Heart left ventricle (tissue), 16 donors: ENCODE measurements at regions of chr5 and their contacts with region 1.

Region 1: DNA sequence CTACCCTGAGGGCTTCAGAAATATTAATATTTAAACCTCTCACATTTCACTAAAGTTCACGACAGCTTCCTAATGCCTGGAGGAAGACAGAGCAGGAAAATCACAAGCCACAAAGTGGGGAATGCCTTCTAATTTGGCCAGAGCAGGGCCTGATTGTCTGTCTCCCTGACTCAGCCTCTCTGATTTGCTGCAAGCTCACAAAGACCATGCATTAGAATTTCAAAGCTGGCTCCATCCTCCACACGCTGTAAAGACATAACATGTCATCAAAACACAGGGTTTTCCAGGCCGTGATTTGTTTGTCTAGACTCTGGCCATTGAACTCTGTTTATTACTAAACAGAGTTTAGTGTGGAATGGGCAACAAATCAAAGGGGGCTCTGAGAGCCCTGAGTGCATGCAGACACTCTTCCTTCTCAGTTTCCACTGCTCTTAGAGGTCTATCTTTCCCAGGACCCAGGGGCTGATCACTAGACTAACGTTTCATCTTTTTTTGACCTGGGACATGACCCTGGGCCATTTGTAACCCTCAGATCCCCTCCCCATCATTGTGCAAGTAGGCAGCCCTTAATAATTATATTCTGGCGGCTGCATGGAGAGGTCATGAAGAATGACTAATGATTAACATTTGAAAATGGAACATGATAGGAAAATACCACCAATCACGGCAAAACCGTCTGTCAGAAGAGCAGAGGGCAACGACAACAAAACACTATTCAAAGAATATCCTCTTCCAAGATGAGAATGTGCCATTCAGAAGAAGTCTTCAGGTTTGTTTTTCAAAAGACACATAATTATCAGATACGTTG is 140.2 kb downstream of the ENC1 start:
- DNase-seq: no peak
- ATAC-seq: no peak
- H3K4me3 ChIP-seq: no peak overlapping the region
- H3K27ac ChIP-seq: no peak overlapping the region
- H3K4me1 ChIP-seq: peaks cover 0 to 23% (median 3%) of the 10 kb centered on the region in 12 donors
- H3K27me3 ChIP-seq: no peaks in the 10 kb centered on the region
- CTCF ChIP-seq: no peak
- POLR2A ChIP-seq: no peak

Region 2: DNA sequence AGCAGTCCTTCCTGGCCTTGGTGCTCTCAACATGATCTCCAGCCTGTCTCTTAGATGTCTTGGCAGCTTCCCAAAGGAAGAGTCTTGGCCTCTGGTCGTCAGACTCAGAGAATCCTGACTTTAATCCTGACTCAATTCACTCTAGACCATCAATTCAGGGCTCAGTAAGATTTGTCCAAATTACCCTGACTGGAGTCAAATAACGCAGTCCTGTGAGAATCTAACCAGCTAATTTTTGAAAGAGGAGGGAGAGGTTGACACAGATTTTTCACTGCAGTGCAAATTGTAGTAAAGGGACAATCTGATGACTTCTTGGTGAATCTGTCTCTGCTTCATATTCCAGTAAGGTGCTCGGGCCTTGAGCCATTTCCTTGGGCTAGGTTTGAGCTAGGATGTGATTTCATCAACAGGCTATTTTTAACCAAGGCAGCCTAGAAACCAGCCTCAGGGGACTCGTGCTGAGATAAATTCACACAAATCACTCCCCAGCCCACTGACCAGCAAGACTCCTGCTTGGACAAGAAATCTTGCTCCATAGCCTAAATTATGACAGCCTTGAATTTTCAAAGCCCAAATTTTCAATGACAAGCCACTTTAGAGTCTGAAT is 117.2 kb before region 1 on chr5:
- intact Hi-C with region 1: loop called in 1 of 10 experiments (anchors 10 kb)
- DNase-seq: peak in 4 of 5 donors; percentile 73 to 78 (median 76)
- ATAC-seq: peak; percentile 72 to 93 (median 86)
- H3K4me3 ChIP-seq: peak overlapping the region in 1 of 12 donors; percentile 8
- H3K27ac ChIP-seq: peak overlapping the region; percentile 31 to 90 (median 70)
- H3K4me1 ChIP-seq: peaks cover 7 to 58% (median 33%) of the 10 kb centered on the region in 12 donors
- H3K27me3 ChIP-seq: no peaks in the 10 kb centered on the region
- CTCF ChIP-seq: no peak
- POLR2A ChIP-seq: no peak

Region 3: DNA sequence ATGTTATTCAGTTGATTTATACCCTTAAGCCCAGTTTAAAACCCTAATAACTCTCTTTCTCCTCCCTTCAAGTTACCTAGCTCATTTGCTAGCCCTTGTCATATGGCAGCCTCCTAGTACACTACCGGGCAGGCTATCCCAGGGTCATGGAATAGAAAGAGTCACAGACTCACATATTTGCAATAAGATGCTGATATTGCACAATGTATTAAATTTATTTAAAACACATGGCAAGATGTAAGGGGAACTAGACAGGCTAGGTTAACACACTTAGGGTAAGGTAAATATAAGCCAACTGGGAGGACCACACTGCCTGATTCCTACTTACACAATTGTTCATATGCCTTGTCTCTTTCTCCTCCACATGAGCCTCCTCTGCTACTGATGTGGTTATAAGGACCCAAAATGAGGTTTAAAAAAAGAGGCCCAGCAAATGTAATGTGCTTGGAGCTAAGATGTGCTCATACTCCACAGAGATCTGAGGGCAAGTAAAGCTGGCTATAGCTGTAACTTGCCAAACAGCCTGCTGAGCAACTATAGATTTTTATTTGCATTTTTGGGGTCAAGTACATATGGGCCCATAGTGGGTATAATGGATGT is 10.3 kb after region 1 on chr5:
- intact Hi-C with region 1: loop called in 1 of 10 experiments (anchors 1 kb)
- DNase-seq: no peak
- ATAC-seq: no peak
- H3K4me3 ChIP-seq: no peak overlapping the region
- H3K27ac ChIP-seq: no peak overlapping the region
- H3K4me1 ChIP-seq: no peaks in the 10 kb centered on the region
- H3K27me3 ChIP-seq: no peaks in the 10 kb centered on the region
- CTCF ChIP-seq: no peak
- POLR2A ChIP-seq: no peak

Region 4: GRCh38 chr5:74595143-74595925 is 95.0 kb after region 1 on chr5:
- intact Hi-C with region 1: no loop called
- DNase-seq: no peak
- ATAC-seq: peak in 1 of 4 donors; percentile 58
- H3K4me3 ChIP-seq: no peak overlapping the region
- H3K27ac ChIP-seq: peak overlapping the region in 7 of 12 donors; percentile 14 to 51 (median 29)
- H3K4me1 ChIP-seq: peaks cover 0 to 15% (median 9%) of the 10 kb centered on the region in 12 donors
- H3K27me3 ChIP-seq: no peaks in the 10 kb centered on the region
- CTCF ChIP-seq: no peak
- POLR2A ChIP-seq: no peak